Panc1 (cell line): ENCODE measurements at regions of chr12 and their contacts with region 1.

Region 1: GRCh38 chr12:104215638-104216297 is at the start of gene TXNRD1:
- DNase-seq: peak; percentile 32
- ATAC-seq: peak; percentile 35
- H3K4me3 ChIP-seq: peak within 1 kb of the TSS; percentile 20 to 33
- H3K27ac ChIP-seq: peak within 1 kb of the TSS; percentile 99
- H3K4me1 ChIP-seq: peaks cover 45% of the 10 kb centered on the region
- H3K27me3 ChIP-seq: no peaks in the 10 kb centered on the region
- CTCF ChIP-seq: peak; percentile 82
- total RNA-seq, gene TXNRD1: 348 TPM

Region 2: DNA sequence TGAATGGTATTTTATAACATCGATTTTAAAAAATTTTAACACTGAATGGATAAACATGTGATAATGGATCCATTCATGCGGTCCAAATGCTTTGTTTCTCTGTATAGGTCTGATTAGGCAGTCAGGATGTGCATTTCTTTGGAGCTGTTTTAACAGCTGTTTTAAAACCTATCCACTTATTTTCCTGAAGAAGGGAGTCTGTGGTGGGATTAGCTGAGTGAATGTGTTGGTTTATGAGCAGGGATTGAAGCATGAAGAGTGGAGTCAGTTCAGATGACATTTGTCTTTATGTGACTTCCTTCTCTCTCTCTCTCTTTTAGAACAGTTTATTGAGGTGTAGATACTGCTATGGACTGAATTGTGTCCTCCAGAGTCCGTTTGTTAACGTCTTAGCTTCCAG is 203.4 kb before region 1 on chr12:
- CTCF ChIA-PET with region 1: no interaction called
- POLR2A ChIA-PET with region 1: no interaction called
- in situ Hi-C with region 1: no loop called
- intact Hi-C with region 1: no loop called
- DNase-seq: no peak
- ATAC-seq: no peak
- H3K4me3 ChIP-seq: no peak overlapping the region
- H3K27ac ChIP-seq: no peak overlapping the region
- H3K4me1 ChIP-seq: no peaks in the 10 kb centered on the region
- H3K27me3 ChIP-seq: no peaks in the 10 kb centered on the region
- CTCF ChIP-seq: no peak

Region 3: GRCh38 chr12:104126548-104126947 is 89.2 kb before region 1 on chr12:
- CTCF ChIA-PET with region 1: no interaction called
- POLR2A ChIA-PET with region 1: interaction called, 15 read pairs
- in situ Hi-C with region 1: no loop called
- intact Hi-C with region 1: no loop called
- DNase-seq: no peak
- ATAC-seq: no peak
- H3K4me3 ChIP-seq: no peak overlapping the region
- H3K27ac ChIP-seq: no peak overlapping the region
- H3K4me1 ChIP-seq: peaks cover 4% of the 10 kb centered on the region; the same call in 1 of the 2 replicates
- H3K27me3 ChIP-seq: no peaks in the 10 kb centered on the region
- CTCF ChIP-seq: no peak

Region 4: DNA sequence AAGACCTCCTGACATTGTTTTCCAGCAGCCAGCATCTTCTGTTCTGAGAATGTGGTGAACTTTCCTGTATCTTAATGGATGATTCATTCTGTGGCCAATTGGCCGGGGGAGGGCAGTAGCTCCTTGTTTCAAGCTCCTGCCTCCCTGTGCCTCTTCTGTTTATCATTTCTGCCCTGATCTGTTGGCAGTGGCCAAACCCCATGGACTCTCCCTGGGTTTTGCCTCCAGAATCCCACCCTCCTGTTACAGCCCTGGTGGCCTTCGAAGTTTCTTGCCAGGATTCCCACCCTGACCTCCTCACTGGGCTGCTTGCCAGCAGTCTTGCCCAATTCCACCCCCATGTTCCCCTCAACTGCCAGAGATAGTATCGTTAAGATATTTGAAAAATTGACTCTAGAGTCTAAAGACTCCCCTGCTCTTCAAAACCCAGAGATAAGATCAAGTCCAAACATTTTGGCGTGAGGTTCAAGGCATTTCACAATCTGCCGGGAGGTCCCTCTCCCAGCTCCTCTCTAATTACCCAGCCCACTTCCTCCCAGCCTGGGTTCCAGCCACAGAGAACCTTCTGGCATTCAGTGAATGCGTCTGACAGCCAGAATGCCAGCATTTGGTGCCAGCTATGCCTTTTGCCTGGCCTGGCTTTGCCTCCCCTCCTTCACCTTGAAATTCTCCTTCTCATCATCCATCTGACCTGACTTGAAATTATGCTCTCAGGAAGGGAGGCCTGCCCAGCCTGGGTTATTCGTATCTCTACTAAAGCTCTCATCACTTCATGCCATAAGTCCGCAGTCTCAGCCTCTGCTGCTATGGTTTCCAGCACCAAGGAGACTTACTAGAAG is 37.9 kb before region 1 on chr12:
- CTCF ChIA-PET with region 1: no interaction called
- POLR2A ChIA-PET with region 1: no interaction called
- in situ Hi-C with region 1: no loop called
- intact Hi-C with region 1: no loop called
- DNase-seq: no peak
- ATAC-seq: peak; percentile 75
- H3K4me3 ChIP-seq: no peak overlapping the region
- H3K27ac ChIP-seq: peak overlapping the region; percentile 19; the same call in 1 of the 2 replicates
- H3K4me1 ChIP-seq: peaks cover 19% of the 10 kb centered on the region
- H3K27me3 ChIP-seq: no peaks in the 10 kb centered on the region
- CTCF ChIP-seq: peak; percentile 44

Region 5: GRCh38 chr12:104250366-104251125 is 34.8 kb after region 1 on chr12:
- CTCF ChIA-PET with region 1: no interaction called
- POLR2A ChIA-PET with region 1: interaction called, 17 read pairs
- in situ Hi-C with region 1: no loop called
- intact Hi-C with region 1: no loop called
- DNase-seq: no peak
- ATAC-seq: no peak
- H3K4me3 ChIP-seq: no peak overlapping the region
- H3K27ac ChIP-seq: peak overlapping the region; percentile 81
- H3K4me1 ChIP-seq: peaks cover 57% of the 10 kb centered on the region
- H3K27me3 ChIP-seq: no peaks in the 10 kb centered on the region
- CTCF ChIP-seq: no peak

Region 6: GRCh38 chr12:104258476-104259067 is 42.8 kb after region 1 on chr12:
- CTCF ChIA-PET with region 1: no interaction called
- POLR2A ChIA-PET with region 1: interaction called, 17 read pairs
- in situ Hi-C with region 1: no loop called
- intact Hi-C with region 1: no loop called
- DNase-seq: no peak
- ATAC-seq: no peak
- H3K4me3 ChIP-seq: no peak overlapping the region
- H3K27ac ChIP-seq: peak overlapping the region; percentile 74
- H3K4me1 ChIP-seq: peaks cover 31% of the 10 kb centered on the region
- H3K27me3 ChIP-seq: no peaks in the 10 kb centered on the region
- CTCF ChIP-seq: no peak

Region 7: GRCh38 chr12:104286538-104287482 is 71.0 kb after region 1 on chr12:
- CTCF ChIA-PET with region 1: interaction called, 9 read pairs
- POLR2A ChIA-PET with region 1: interaction called, 20 read pairs
- in situ Hi-C with region 1: no loop called
- intact Hi-C with region 1: loop called (anchors 2 kb)
- DNase-seq: peak; percentile 92
- ATAC-seq: peak; percentile 86
- H3K4me3 ChIP-seq: peak overlapping the region; percentile 86 to 87
- H3K27ac ChIP-seq: peak overlapping the region; percentile 99
- H3K4me1 ChIP-seq: peaks cover 25% of the 10 kb centered on the region
- H3K27me3 ChIP-seq: no peaks in the 10 kb centered on the region
- CTCF ChIP-seq: no peak

Region 8: DNA sequence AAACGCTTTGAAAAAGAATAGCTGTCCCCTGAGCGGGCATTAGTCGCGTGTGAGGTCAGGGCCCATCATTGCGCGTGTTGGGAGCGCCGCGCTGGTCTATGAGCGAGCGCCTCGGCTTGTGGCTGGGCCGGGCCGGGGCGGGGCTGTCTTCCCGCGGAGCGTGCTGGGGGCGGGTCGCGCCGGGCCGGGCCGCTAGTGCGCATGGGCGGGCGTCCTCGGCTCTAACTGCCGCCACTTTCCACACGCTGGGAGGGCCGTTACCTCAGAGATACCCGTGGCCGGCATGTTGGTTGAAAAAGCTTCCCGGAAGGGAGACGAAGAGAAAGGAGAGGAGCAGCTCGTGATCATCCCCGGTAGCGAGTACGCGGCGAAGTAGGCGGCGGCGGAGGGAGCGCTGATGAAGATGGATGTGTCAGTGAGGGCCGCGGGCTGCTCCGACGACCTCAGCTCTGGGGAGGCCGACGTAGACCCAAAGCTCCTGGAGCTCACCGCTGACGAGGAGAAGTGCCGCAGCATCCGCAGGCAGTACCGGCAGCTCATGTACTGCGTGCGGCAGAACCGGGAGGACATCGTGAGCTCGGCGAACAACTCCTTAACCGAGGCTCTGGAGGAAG is 87.9 kb after region 1 on chr12 and contains the start of gene EID3:
- CTCF ChIA-PET with region 1: no interaction called
- POLR2A ChIA-PET with region 1: interaction called, 7 read pairs
- in situ Hi-C with region 1: loop called (anchors 5 kb)
- intact Hi-C with region 1: loop called (anchors 5 kb)
- DNase-seq: no peak
- ATAC-seq: peak; percentile 86
- H3K4me3 ChIP-seq: peak within 1 kb of the TSS; percentile 57 to 73
- H3K27ac ChIP-seq: peak within 1 kb of the TSS; percentile 96
- H3K4me1 ChIP-seq: peaks cover 65% of the 10 kb centered on the region
- H3K27me3 ChIP-seq: no peaks in the 10 kb centered on the region
- CTCF ChIP-seq: no peak
- total RNA-seq, gene EID3: 18.5 TPM

Region 9: DNA sequence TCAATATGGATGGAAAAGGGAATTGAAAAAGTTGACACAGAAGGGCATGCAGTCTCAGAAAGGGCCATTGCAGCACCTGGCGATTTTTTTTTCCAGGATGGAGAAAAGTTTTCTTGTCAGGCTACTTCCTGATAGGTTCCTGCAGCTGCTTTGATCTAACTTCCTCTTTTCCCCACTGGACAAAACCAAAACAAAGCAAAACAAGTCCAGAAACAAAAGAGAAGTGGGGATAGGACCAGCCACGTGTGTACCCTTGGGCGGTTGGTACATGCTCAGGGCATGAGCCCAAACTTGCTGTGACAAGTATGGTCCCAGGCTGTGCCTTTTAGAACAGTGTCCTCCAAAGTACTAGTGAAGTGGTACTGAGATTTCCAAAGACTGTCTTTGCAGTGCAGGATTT is 330.8 kb after region 1 on chr12:
- CTCF ChIA-PET with region 1: no interaction called
- POLR2A ChIA-PET with region 1: no interaction called
- in situ Hi-C with region 1: no loop called
- intact Hi-C with region 1: no loop called
- DNase-seq: no peak
- ATAC-seq: no peak
- H3K4me3 ChIP-seq: no peak overlapping the region
- H3K27ac ChIP-seq: no peak overlapping the region
- H3K4me1 ChIP-seq: no peaks in the 10 kb centered on the region
- H3K27me3 ChIP-seq: no peaks in the 10 kb centered on the region
- CTCF ChIP-seq: no peak